ENCODE measurements at regions of chr11 and their contacts with region 1.

Region 1: GRCh38 chr11:45771566-45772448 is 33.1 kb upstream of the SLC35C1 start:
- H3K4me3 ChIP-seq: peak overlapping the region; percentile 39
- H3K27ac ChIP-seq: no peak overlapping the region
- H3K4me1 ChIP-seq: no peaks in the 10 kb centered on the region
- CTCF ChIP-seq: peak; percentile 79

Region 2: DNA sequence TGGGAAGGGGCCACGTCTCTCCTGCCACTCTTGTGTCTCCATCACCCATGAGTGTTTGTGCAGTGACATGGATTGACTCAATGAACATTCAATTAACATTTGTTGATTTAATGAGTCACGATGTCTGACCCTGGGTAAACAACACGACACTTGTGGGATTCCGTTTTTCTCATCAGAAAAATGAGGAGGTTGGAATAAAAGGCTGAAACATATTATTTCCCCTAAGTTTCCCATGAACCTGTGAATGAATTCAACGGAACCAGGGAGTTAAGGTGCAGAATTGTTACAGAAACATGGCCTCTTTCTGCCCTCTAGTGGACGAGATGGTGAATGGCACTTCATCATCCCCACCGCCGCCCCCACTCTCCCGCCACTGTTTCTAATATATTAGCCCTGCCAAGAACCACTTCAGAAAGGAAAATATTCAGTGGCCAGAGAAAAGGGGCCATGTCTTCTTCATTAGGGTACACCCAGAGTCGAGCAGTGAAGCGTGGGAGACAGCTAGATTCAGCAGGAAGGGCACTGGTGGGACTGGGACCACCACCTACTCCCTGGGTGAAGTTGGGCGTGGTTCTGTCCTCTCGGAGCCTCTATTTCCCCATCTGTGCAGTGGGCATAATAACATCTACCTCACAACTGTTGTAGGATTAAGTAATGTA is 439.4 kb before region 1 on chr11:
- CTCF ChIA-PET with region 1: interaction called, 11 read pairs
- POLR2A ChIA-PET with region 1: no interaction called
- H3K4me3 ChIP-seq: no peak overlapping the region
- H3K27ac ChIP-seq: no peak overlapping the region
- H3K4me1 ChIP-seq: no peaks in the 10 kb centered on the region
- CTCF ChIP-seq: no peak

Region 3: GRCh38 chr11:45354976-45355705 is 416.7 kb before region 1 on chr11:
- CTCF ChIA-PET with region 1: interaction called, 10 read pairs
- POLR2A ChIA-PET with region 1: no interaction called
- H3K4me3 ChIP-seq: peak overlapping the region; percentile 85
- H3K27ac ChIP-seq: 0 out of 2 replicates have a peak overlapping the region, but pooled peaks have one; percentile 20
- H3K4me1 ChIP-seq: no peaks in the 10 kb centered on the region
- CTCF ChIP-seq: no peak

Region 4: GRCh38 chr11:45383224-45383623 is 388.6 kb before region 1 on chr11:
- CTCF ChIA-PET with region 1: interaction called, 12 read pairs
- POLR2A ChIA-PET with region 1: no interaction called
- H3K4me3 ChIP-seq: no peak overlapping the region
- H3K27ac ChIP-seq: no peak overlapping the region
- H3K4me1 ChIP-seq: no peaks in the 10 kb centered on the region
- CTCF ChIP-seq: no peak

Region 5: GRCh38 chr11:45655347-45655756 is 116.5 kb before region 1 on chr11:
- CTCF ChIA-PET with region 1: interaction called, 36 read pairs
- POLR2A ChIA-PET with region 1: no interaction called
- H3K4me3 ChIP-seq: no peak overlapping the region
- H3K27ac ChIP-seq: no peak overlapping the region
- H3K4me1 ChIP-seq: no peaks in the 10 kb centered on the region
- CTCF ChIP-seq: peak; percentile 88

Region 6: DNA sequence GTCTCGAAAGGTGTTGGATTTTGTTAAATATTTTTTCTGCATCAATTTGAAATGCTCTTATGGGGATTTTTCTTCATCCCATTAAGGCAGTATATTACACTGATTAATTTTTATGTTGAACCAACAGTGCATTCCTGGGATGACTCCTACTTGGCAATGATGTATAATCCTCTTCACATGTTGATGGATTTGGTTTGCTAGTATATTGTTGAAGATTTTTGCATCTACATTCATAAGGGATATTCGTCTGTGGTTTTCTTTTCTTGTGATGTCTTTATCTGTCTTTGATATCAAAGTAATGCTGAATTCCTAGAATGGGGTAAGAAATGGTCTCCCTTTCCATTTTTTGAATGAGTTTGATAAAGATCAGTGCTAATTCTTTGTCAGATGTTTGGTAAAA is 14.5 kb after region 1 on chr11:
- CTCF ChIA-PET with region 1: interaction called, 10 read pairs
- POLR2A ChIA-PET with region 1: no interaction called
- H3K4me3 ChIP-seq: no peak overlapping the region
- H3K27ac ChIP-seq: no peak overlapping the region
- H3K4me1 ChIP-seq: no peaks in the 10 kb centered on the region
- CTCF ChIP-seq: no peak

Region 7: DNA sequence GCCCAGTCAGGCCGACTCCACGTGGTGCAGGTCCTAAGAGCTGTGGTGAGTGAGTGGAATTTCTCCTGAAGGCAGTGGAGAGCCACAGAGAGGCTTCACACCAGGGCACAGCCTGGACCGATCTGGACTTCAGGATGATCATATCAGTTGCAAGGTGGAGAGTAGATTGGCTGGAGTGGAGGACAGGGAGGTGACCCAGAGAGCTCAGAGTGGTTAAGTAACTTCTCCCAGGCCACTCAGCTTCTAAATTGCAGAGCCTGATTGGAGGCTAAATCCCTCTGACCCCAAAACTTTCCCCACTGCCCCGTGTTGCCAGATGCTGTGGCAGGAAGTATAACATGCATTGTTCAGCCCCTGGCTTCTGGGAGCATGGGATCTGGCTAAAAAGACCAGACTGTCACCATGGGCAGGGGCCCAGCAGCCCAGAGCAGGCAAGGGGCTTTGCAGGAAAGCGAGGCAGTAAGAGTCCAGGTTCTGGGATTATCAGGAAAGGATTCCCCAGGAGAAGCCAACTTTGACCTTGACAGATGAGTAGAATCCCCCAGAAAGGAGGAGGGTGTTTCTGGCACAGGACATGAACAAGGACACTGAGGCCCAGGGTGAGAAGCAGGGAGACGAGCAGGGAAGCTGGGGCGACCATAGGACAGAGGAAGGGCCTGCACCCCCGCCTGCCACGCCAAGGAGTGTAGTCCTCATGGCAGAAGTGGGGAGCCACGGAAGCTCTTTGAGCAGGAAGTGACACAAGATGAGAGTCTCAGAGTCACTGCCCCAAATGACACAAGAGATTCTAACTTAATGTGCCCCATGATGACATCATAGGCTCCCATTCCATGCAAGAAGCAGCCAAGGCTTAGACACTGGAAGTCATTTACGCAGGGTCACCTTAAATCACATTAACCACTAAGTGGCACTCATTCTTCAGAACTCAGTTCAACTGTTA is 37.9 kb after region 1 on chr11:
- CTCF ChIA-PET with region 1: no interaction called
- POLR2A ChIA-PET with region 1: no interaction called
- H3K4me3 ChIP-seq: no peak overlapping the region
- H3K27ac ChIP-seq: no peak overlapping the region
- H3K4me1 ChIP-seq: peaks cover 5% of the 10 kb centered on the region
- CTCF ChIP-seq: no peak

Region 8: GRCh38 chr11:45843118-45843924 is 71.5 kb after region 1 on chr11:
- CTCF ChIA-PET with region 1: no interaction called
- POLR2A ChIA-PET with region 1: no interaction called
- H3K4me3 ChIP-seq: no peak overlapping the region
- H3K27ac ChIP-seq: no peak overlapping the region
- H3K4me1 ChIP-seq: no peaks in the 10 kb centered on the region
- CTCF ChIP-seq: peak; percentile 68

Region 9: GRCh38 chr11:46100670-46101069 is 328.9 kb after region 1 on chr11:
- CTCF ChIA-PET with region 1: no interaction called
- POLR2A ChIA-PET with region 1: no interaction called
- H3K4me3 ChIP-seq: no peak overlapping the region
- H3K27ac ChIP-seq: no peak overlapping the region
- H3K4me1 ChIP-seq: peaks cover 12% of the 10 kb centered on the region
- CTCF ChIP-seq: no peak